Right ventricle myocardium inferior (tissue), 1 donor: ENCODE measurements at regions of chr12 and their contacts with region 1.

Region 1: DNA sequence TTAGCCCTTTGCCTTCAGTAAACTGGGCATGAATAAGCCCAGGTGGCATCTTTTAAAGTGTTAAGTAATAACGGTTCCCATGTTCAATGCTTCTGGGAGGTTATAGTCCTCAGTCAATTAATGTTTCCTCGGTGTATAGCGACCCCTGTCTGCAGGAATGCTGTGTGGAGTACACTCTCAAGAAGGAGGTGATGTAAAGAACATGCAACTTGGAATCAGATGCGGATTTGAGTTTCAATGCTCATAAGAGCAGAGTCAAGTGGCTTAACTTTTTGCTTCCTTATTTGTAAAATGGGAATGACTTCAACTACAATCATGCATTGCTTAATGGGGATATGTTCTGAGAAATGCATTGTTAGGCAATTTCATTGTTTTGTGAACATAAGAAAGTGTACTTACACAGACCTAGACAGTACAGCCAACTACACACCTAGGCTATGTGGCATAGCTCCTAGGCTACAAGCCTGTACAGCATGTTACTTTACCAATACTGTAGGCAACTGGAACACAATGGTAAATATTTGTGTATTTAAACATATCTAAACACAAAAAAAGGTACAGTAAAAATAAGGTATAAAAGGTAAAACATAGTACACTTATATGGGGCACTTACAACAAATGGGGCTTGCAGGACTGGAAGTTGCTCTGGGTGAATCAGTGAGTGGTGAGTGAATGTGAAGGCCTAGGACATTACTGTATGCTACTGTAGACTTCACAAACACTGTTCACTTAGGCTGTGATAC is 6.8 kb upstream of the MRPS35 start:
- DNase-seq: no peak
- ATAC-seq: peak; percentile 84

Region 2: DNA sequence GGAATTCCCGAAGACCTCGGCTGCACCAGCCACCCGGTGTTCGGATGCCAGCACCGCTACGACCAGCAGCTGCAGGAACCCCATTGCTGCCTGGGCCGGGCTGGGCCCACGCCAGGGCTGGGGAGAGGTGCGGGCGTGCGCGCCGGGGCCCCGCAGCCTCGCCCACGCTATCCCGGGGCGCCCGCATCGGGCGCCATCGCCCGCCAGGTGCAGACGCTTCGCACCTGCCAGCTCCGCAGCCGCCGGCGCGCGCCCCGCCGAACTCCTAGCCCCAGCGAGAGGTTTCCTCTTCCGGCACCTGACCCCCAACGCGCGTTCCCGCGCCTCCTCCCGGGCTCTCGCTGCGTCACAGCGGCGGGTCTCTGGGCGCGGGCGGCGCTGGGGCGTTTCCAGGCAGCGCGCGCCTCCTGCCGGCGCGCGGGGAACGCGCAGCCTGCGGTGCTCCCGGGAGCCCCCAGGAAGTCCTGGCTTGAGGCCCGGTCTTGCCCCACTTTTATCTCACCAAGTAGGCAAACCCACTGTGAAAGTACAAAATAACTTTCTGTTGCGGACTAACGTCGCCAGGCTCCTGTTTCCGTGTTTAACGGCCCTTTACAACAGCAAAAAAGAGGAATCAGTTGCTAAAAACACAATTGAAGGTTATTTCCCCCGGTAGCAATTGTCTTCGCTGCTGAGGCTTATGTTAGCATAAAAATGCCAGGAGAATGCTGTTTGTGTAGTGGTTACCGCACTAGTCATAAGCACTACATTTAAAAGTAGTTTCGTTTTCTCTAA is 689.6 kb before region 1 on chr12 and contains the start of gene TM7SF3:
- intact Hi-C with region 1: loop called (anchors 10 kb)
- DNase-seq: peak; percentile 98
- ATAC-seq: peak; percentile 96
- total RNA-seq, gene TM7SF3: 22.3 TPM

Region 3: GRCh38 chr12:27324530-27324929 is 379.4 kb before region 1 on chr12:
- intact Hi-C with region 1: loop called (anchors 10 kb)
- DNase-seq: no peak
- ATAC-seq: no peak

Region 4: DNA sequence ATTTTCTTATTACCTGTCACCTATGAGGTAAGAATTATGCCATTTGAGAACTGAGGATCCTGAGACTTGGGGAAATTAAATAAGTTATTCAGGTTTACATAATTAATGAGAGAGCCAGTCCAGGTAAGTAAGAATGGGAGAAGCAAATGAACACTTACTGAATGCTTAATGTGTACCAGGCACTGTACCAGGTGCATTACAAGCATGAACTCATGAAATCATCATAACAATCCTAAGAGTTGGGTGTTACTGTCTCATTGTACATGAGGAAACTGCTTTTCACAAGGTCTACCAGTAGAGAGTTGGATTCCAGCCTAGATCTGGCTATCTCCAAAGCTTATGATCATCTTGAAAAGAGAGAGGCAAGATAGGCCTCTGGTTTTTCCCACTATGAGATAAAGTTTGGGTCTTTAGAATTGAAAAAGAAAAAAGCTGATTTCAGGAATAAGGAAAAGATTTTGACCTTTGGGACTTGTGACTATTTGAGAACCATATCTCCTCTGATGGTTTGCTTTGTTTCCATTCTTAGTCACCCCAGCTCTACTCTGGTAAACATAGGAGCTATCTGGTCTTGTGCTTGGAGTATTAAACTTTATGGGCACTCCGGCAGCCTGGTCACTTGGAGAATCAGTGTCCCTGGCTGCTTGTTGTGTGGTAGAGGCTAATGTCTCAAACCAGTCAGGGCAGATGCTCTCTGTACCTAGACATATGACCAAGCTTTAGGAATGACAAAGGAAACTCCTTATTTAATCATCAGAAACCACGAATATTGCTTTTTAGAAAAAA is 220.7 kb after region 1 on chr12:
- intact Hi-C with region 1: no loop called
- DNase-seq: no peak
- ATAC-seq: no peak